Naive thymus-derived CD4-positive, alpha-beta T cell (primary cell): ENCODE measurements at regions of chr2 and their contacts with region 1.

Region 1: DNA sequence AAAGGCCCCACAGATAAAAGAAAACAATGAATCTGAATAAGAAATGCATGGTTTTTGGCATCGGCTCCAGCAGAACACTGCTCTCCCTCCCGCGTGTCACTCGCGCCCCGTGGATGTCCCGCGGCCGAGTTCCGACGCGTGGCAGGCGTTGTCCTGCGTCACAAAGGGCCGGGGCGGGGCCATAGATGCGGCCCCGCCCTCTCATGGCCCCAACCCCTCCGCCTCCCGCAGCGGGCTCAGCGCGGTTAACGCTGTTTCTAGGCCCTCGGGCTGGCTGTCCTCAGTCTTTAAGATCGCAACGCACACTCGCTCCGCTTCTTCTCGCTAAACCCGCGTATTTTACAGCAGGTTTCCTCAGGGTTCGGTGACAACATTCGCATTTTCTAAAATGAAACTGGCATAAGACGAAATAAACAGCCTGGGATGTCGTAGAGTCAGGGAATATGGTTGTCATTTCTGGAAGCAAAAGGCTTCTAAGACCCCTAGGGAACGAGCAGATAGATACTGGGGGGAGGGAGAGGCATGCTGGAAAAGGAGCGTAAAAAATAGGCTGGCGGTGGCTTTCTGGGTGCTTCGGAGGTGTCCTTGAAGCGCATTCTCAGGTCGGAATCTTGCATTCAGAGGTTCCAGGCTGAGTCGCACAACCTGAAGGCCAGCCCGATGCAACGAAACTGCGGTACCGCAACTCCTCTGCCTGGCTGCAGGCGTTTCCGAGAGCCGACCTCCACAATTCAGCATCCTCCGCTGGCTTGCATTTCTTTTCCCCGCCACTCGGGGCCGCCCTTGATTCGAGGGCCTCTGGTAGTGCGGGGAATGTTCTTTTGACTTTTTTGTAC is at the start of gene FKBP7:
- DNase-seq: peak; percentile 71 to 87 (median 80)
- ATAC-seq: peak; percentile 90
- H3K4me3 ChIP-seq: peak within 1 kb of the TSS; percentile 91
- H3K4me3 Mint-ChIP-seq: peak within 1 kb of the TSS; percentile 94 to 100 (median 99)
- H3K27ac ChIP-seq: peak within 1 kb of the TSS; percentile 80
- H3K27ac Mint-ChIP-seq: peak within 1 kb of the TSS; percentile 91 to 99 (median 98)
- H3K4me1 ChIP-seq: peaks cover 22 to 28% of the 10 kb centered on the region in 2 donors
- H3K4me1 Mint-ChIP-seq: peaks cover 27 to 45% (median 41%) of the 10 kb centered on the region in 7 donors
- H3K27me3 ChIP-seq: no peaks in the 10 kb centered on the region
- H3K27me3 Mint-ChIP-seq: no peaks in the 10 kb centered on the region
- total RNA-seq, gene FKBP7: 0.64 to 2.7 (median 1.9) TPM

Region 2: GRCh38 chr2:178193823-178194599 is 284.6 kb before region 1 on chr2 and contains the start of gene OSBPL6:
- CTCF ChIA-PET with region 1: no interaction called
- POLR2A ChIA-PET with region 1: no interaction called
- intact Hi-C with region 1: loop called in 1 of 2 experiments (anchors 1 kb)
- DNase-seq: peak; percentile 10 to 82 (median 41)
- ATAC-seq: peak; percentile 87
- H3K4me3 ChIP-seq: peak within 1 kb of the TSS; percentile 46
- H3K4me3 Mint-ChIP-seq: peak within 1 kb of the TSS; percentile 56 to 83 (median 77)
- H3K27ac ChIP-seq: no peak within 1 kb of the TSS
- H3K27ac Mint-ChIP-seq: no peak within 1 kb of the TSS
- H3K4me1 ChIP-seq: peaks cover 6% of the 10 kb centered on the region in 2 donors
- H3K4me1 Mint-ChIP-seq: peaks cover 6 to 19% (median 13%) of the 10 kb centered on the region in 7 donors
- H3K27me3 ChIP-seq: peaks cover 18% of the 10 kb centered on the region in 2 donors
- H3K27me3 Mint-ChIP-seq: peaks cover 45 to 59% (median 54%) of the 10 kb centered on the region in 5 donors
- total RNA-seq, gene OSBPL6: 0.05 to 1.1 (median 0.44) TPM in 4 of 5 experiments, not detected in the other

Region 3: GRCh38 chr2:178498137-178498536 is 19.5 kb after region 1 on chr2:
- CTCF ChIA-PET with region 1: no interaction called
- POLR2A ChIA-PET with region 1: no interaction called
- intact Hi-C with region 1: loop called in 1 of 2 experiments (anchors 2 kb)
- DNase-seq: no peak
- ATAC-seq: no peak
- H3K4me3 ChIP-seq: no peak overlapping the region
- H3K4me3 Mint-ChIP-seq: no peak overlapping the region
- H3K27ac ChIP-seq: no peak overlapping the region
- H3K27ac Mint-ChIP-seq: no peak overlapping the region
- H3K4me1 ChIP-seq: no peaks in the 10 kb centered on the region
- H3K4me1 Mint-ChIP-seq: peaks cover 0 to 12% (median 0%) of the 10 kb centered on the region in 7 donors
- H3K27me3 ChIP-seq: no peaks in the 10 kb centered on the region
- H3K27me3 Mint-ChIP-seq: no peaks in the 10 kb centered on the region

Region 4: GRCh38 chr2:178522950-178523595 is 44.4 kb after region 1 on chr2:
- CTCF ChIA-PET with region 1: interaction called, 3 read pairs
- POLR2A ChIA-PET with region 1: interaction called, 10 read pairs
- intact Hi-C with region 1: loop called (anchors 1 kb)
- DNase-seq: peak; percentile 65 to 85 (median 80)
- ATAC-seq: peak; percentile 100
- H3K4me3 ChIP-seq: peak overlapping the region; percentile 93
- H3K4me3 Mint-ChIP-seq: peak overlapping the region; percentile 84 to 96 (median 94)
- H3K27ac ChIP-seq: peak overlapping the region; percentile 75
- H3K27ac Mint-ChIP-seq: peak overlapping the region; percentile 80 to 96 (median 91)
- H3K4me1 ChIP-seq: peaks cover 7 to 10% of the 10 kb centered on the region in 2 donors
- H3K4me1 Mint-ChIP-seq: peaks cover 14 to 58% (median 22%) of the 10 kb centered on the region in 7 donors
- H3K27me3 ChIP-seq: no peaks in the 10 kb centered on the region
- H3K27me3 Mint-ChIP-seq: no peaks in the 10 kb centered on the region

Region 5: GRCh38 chr2:180006781-180007579 is 1528.3 kb after region 1 on chr2 and contains the start of gene CWC22:
- CTCF ChIA-PET with region 1: no interaction called
- POLR2A ChIA-PET with region 1: no interaction called
- intact Hi-C with region 1: loop called in 1 of 2 experiments (anchors 2 kb)
- DNase-seq: peak; percentile 73 to 93 (median 89)
- ATAC-seq: peak; percentile 96
- H3K4me3 ChIP-seq: peak within 1 kb of the TSS; percentile 96
- H3K4me3 Mint-ChIP-seq: peak within 1 kb of the TSS; percentile 92 to 100 (median 96)
- H3K27ac ChIP-seq: peak within 1 kb of the TSS; percentile 93
- H3K27ac Mint-ChIP-seq: peak within 1 kb of the TSS; percentile 98 to 100 (median 99)
- H3K4me1 ChIP-seq: peaks cover 8 to 11% of the 10 kb centered on the region in 2 donors
- H3K4me1 Mint-ChIP-seq: peaks cover 19 to 54% (median 49%) of the 10 kb centered on the region in 7 donors
- H3K27me3 ChIP-seq: no peaks in the 10 kb centered on the region
- H3K27me3 Mint-ChIP-seq: peaks cover 0 to 3% (median 0%) of the 10 kb centered on the region in 5 donors
- total RNA-seq, gene CWC22: 14.4 to 32.0 (median 23.5) TPM